ENCODE measurements at regions of chr5 and their contacts with region 1.

Region 1: GRCh38 chr5:127040796-127041520 is 10.6 kb upstream of the MARCHF3 start:
- DNase-seq: peak; percentile 54
- ATAC-seq: peak; percentile 22; the same call in 1 of the 2 replicates
- H3K4me3 ChIP-seq: no peak overlapping the region
- H3K27ac ChIP-seq: no peak overlapping the region
- H3K4me1 ChIP-seq: peaks cover 3% of the 10 kb centered on the region; the same call in 1 of the 2 replicates
- H3K27me3 ChIP-seq: no peaks in the 10 kb centered on the region
- CTCF ChIP-seq: no peak
- POLR2A ChIP-seq: no peak
- RAD21 ChIP-seq: no peak

Region 2: DNA sequence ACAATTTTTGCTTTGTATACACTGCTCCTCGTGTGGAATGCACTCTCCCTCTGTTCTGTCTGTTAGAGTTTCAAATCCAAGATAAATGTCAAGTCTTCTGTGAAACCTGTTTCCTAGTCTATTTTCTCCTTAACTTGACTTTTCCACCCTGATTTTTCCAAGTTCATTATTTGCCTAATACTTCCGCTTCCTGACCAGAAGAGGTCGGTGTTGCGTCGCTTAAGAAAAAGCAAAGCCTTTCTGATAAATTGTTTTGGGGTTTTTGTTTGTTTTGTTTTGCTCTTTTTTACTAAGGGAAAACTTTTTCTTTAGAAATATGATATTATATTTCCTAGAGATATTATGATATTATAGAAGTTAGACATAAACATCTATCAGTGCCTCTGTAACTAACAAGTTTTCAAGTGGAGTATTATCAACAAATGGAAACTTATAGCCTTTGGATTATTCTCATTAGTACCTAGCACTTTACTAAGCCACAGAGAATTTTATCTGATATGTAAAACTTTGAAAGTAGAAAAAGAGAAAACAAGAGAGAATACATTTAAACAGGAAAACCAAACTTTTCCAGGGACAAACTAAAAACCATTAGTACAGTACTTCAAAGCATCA is 384.5 kb before region 1 on chr5:
- CTCF ChIA-PET with region 1: no interaction called
- POLR2A ChIA-PET with region 1: no interaction called
- dilution Hi-C with region 1: no loop called
- in situ Hi-C with region 1: no loop called
- intact Hi-C with region 1: loop called (anchors 10 kb)
- DNase-seq: peak; percentile 57
- ATAC-seq: peak; percentile 44; the same call in 1 of the 2 replicates
- H3K4me3 ChIP-seq: no peak overlapping the region
- H3K27ac ChIP-seq: no peak overlapping the region
- H3K4me1 ChIP-seq: no peaks in the 10 kb centered on the region
- H3K27me3 ChIP-seq: no peaks in the 10 kb centered on the region
- CTCF ChIP-seq: peak; percentile 94
- POLR2A ChIP-seq: no peak
- RAD21 ChIP-seq: peak; percentile 84

Region 3: GRCh38 chr5:127447827-127448226 is 406.9 kb after region 1 on chr5:
- CTCF ChIA-PET with region 1: no interaction called
- POLR2A ChIA-PET with region 1: no interaction called
- dilution Hi-C with region 1: no loop called
- in situ Hi-C with region 1: no loop called
- intact Hi-C with region 1: no loop called
- DNase-seq: peak; percentile 74
- ATAC-seq: peak; percentile 81
- H3K4me3 ChIP-seq: no peak overlapping the region
- H3K27ac ChIP-seq: no peak overlapping the region
- H3K4me1 ChIP-seq: peaks cover 2% of the 10 kb centered on the region; the same call in 1 of the 2 replicates
- H3K27me3 ChIP-seq: peaks cover 10% of the 10 kb centered on the region
- CTCF ChIP-seq: no peak
- POLR2A ChIP-seq: no peak
- RAD21 ChIP-seq: no peak